ENCODE measurements at regions of chr12 and their contacts with region 1.

Region 1: DNA sequence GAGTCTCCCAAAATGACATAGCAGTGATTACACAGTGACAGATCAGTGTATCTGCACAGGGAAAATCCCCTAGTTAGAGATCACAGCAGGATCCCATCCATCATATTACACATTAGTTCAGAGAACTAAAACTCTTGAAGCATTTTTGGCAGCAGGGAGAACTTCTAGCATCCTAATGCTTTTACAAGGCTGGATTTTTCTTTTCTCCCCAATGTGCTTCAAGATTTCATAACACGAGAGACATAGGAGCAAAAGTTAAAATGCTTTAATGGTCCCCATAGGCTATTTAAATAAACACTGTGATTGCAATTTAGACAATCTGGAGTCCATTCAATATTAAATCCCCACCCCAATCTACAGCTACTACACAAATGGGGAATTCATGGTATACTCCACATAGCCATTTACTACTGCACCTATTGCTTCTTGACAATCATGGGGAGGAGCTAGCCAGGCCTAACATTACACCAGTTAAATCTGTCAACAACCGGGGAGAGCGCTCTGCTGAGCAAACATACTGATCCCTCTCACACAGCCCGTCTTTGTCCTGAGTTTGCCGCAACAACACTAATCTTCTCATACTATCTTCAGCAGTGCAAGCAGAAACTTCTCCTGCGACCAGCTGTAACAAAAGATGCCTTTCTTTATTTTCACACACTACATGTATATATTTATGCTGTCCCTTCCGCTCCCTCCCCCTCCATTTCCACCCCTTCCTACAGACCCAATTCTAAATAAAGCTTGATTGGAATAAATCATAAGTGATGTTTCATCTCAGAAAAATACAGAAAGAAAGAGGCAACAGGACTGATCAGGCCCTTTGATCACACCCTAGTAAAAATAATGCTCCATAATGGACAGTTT is 120.3 kb upstream of the SOX5 start:
- DNase-seq: peak; percentile 84 to 85
- H3K4me3 ChIP-seq: no peak overlapping the region
- H3K4me3 Mint-ChIP-seq: peak overlapping the region; percentile 65
- H3K27ac Mint-ChIP-seq: peak overlapping the region; percentile 56
- H3K4me1 ChIP-seq: peaks cover 25% of the 10 kb centered on the region
- H3K4me1 Mint-ChIP-seq: peaks cover 26% of the 10 kb centered on the region
- H3K27me3 ChIP-seq: no peaks in the 10 kb centered on the region
- H3K27me3 Mint-ChIP-seq: no peaks in the 10 kb centered on the region
- CTCF ChIP-seq: no peak

Region 2: DNA sequence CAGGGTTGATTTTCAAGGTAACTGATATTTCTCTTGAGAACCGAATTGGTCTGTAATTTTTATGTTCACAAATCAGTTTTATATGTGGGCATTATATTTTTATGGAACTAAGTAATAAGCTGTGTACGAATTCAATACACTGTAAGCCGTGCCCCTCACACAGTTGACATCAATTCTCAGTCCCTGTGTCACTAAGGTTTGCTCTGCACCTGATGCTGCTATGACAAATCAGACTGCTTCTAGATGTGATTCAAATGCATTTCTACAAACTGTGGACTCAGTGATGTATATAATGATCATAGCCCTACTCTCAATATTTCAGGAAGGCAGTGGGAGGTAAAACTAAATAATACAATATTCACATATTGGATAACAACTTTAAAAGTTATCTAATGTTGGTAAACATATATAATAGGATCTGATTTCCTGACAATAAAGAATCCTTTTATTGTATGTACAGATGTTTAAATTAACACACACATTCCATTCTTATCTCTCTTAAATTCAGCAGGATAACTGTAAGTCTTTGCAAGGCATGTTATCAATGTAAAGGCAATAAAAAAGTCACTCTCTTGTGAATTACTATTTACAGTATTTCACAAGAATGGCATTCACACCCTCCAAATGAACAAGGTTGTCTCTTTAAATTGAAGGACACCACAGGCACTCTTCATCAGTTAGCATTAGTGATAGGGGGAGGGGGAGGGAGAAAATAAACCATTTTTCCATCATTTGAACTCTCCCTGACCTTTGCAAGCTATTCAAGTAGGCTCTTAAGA is 33.1 kb before region 1 on chr12:
- CTCF ChIA-PET with region 1: no interaction called
- POLR2A ChIA-PET with region 1: no interaction called
- intact Hi-C with region 1: loop called (anchors 2 kb)
- DNase-seq: peak in 1 of 2 experiments; percentile 36
- H3K4me3 ChIP-seq: no peak overlapping the region
- H3K4me3 Mint-ChIP-seq: no peak overlapping the region
- H3K27ac Mint-ChIP-seq: no peak overlapping the region
- H3K4me1 ChIP-seq: peaks cover 38% of the 10 kb centered on the region
- H3K4me1 Mint-ChIP-seq: peaks cover 28% of the 10 kb centered on the region
- H3K27me3 ChIP-seq: no peaks in the 10 kb centered on the region
- H3K27me3 Mint-ChIP-seq: no peaks in the 10 kb centered on the region
- CTCF ChIP-seq: no peak

Region 3: GRCh38 chr12:24054416-24054815 is 15.3 kb before region 1 on chr12:
- CTCF ChIA-PET with region 1: no interaction called
- POLR2A ChIA-PET with region 1: no interaction called
- intact Hi-C with region 1: loop called (anchors 2 kb)
- DNase-seq: no peak
- H3K4me3 ChIP-seq: no peak overlapping the region
- H3K4me3 Mint-ChIP-seq: no peak overlapping the region
- H3K27ac Mint-ChIP-seq: no peak overlapping the region
- H3K4me1 ChIP-seq: peaks cover 9% of the 10 kb centered on the region
- H3K4me1 Mint-ChIP-seq: no peaks in the 10 kb centered on the region
- H3K27me3 ChIP-seq: no peaks in the 10 kb centered on the region
- H3K27me3 Mint-ChIP-seq: no peaks in the 10 kb centered on the region
- CTCF ChIP-seq: no peak

Region 4: DNA sequence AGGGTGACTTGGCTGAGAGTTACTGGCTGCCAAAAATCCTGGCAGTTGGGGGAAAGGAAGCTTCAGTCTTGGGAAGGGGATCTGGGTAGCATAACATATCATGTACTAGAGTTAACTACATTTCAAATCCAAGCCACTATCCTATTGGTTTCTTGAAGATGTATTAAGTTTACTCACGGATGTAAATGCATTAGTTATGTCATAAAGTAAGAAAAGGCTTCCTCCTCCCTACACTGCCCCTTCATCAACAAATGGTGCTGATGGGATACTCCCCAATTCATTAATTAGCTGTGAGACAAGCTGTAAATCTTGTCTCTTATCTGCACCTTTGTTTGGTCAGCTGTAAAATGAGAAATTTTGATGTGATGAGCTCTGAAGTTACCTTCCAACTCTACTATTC is 29.8 kb after region 1 on chr12:
- CTCF ChIA-PET with region 1: no interaction called
- POLR2A ChIA-PET with region 1: interaction called, 19 read pairs
- intact Hi-C with region 1: no loop called
- DNase-seq: no peak
- H3K4me3 ChIP-seq: no peak overlapping the region
- H3K4me3 Mint-ChIP-seq: no peak overlapping the region
- H3K27ac Mint-ChIP-seq: no peak overlapping the region
- H3K4me1 ChIP-seq: peaks cover 8% of the 10 kb centered on the region; the same call in 1 of the 2 replicates
- H3K4me1 Mint-ChIP-seq: peaks cover 6% of the 10 kb centered on the region
- H3K27me3 ChIP-seq: no peaks in the 10 kb centered on the region
- H3K27me3 Mint-ChIP-seq: no peaks in the 10 kb centered on the region
- CTCF ChIP-seq: no peak

Region 5: GRCh38 chr12:24297516-24297915 is 227.8 kb after region 1 on chr12:
- CTCF ChIA-PET with region 1: no interaction called
- POLR2A ChIA-PET with region 1: no interaction called
- intact Hi-C with region 1: no loop called
- DNase-seq: no peak
- H3K4me3 ChIP-seq: no peak overlapping the region
- H3K4me3 Mint-ChIP-seq: no peak overlapping the region
- H3K27ac Mint-ChIP-seq: no peak overlapping the region
- H3K4me1 ChIP-seq: no peaks in the 10 kb centered on the region
- H3K4me1 Mint-ChIP-seq: no peaks in the 10 kb centered on the region
- H3K27me3 ChIP-seq: no peaks in the 10 kb centered on the region
- H3K27me3 Mint-ChIP-seq: no peaks in the 10 kb centered on the region
- CTCF ChIP-seq: no peak

Region 6: DNA sequence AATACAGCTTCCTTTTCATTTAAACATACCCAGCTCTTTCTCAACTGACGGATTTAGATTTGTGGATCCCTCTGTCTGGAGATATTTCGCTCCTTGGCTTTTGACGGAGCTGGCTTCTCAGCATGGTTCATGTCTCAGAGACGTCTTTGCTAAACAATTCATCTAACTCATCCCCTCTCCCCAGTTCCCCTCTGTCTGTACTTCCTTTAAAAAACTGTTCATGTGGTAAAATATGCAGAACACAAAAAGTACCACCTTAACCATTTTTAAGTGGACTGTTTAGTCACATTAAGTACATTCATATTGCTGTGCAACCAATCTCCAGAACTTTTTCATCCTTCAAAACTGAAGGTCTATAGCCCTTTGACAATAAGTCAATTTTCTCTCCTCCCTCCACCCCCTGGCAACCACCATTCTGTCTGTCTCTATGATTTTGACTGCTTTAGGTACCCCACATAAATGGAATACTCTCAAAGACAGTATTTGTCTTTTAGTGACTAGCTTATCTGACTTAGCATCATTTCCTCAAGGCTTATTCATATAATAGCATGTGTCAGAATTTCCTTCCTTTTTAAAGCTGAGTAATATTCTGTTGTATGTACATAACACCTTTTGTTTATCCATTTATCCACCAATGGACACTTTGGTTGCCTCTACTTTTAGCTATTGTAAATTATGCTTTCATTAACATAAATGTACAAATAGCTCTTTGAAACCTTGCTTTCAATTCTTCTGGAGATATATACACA is 279.5 kb after region 1 on chr12:
- CTCF ChIA-PET with region 1: no interaction called
- POLR2A ChIA-PET with region 1: no interaction called
- intact Hi-C with region 1: no loop called
- DNase-seq: no peak
- H3K4me3 ChIP-seq: no peak overlapping the region
- H3K4me3 Mint-ChIP-seq: no peak overlapping the region
- H3K27ac Mint-ChIP-seq: no peak overlapping the region
- H3K4me1 ChIP-seq: no peaks in the 10 kb centered on the region
- H3K4me1 Mint-ChIP-seq: peaks cover 6% of the 10 kb centered on the region
- H3K27me3 ChIP-seq: no peaks in the 10 kb centered on the region
- H3K27me3 Mint-ChIP-seq: no peaks in the 10 kb centered on the region
- CTCF ChIP-seq: no peak

Measured in Caco-2 (cell line).